GM12878 (cell line): ENCODE measurements at regions of chr2 and their contacts with region 1.

Region 1: GRCh38 chr2:74587664-74588277 is 33.3 kb downstream of the DOK1 start:
- DNase-seq: no peak
- ATAC-seq: peak; percentile 86
- H3K4me3 ChIP-seq: no peak overlapping the region
- H3K27ac ChIP-seq: no peak overlapping the region
- H3K4me1 ChIP-seq: peaks cover 29% of the 10 kb centered on the region
- H3K27me3 ChIP-seq: no peaks in the 10 kb centered on the region
- CTCF ChIP-seq: peak; percentile 68 to 90 (median 86); a peak in 5 of 6 replicates
- EP300 ChIP-seq: no peak
- POLR2A ChIP-seq: no peak
- RAD21 ChIP-seq: peak; percentile 96

Region 2: DNA sequence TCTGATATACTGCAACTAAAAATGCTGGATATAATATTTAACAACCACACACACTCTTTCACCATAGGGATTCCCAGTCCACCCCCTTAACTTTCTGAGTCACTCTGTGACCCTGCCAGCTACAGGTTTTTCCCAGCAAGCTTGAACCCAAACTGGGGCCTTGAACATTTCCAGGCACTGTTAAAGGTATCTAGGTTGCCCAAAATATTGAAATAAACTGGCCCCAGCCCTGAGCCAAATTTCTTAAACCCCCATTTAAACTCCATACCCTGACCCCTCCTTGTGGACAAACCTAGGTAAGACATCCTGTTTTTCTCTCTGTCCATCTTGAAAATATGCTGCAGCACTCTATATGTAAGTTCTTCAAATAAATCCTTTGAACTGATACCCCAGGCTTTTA is 188.0 kb before region 1 on chr2:
- CTCF ChIA-PET with region 1: interaction called, 3 read pairs
- POLR2A ChIA-PET with region 1: no interaction called
- RAD21 ChIA-PET with region 1: interaction called, 4 read pairs
- SMC1A ChIA-PET with region 1: interaction called, 4 read pairs
- in situ Hi-C with region 1: no loop called
- intact Hi-C with region 1: loop called (anchors 5 kb)
- DNase-seq: no peak
- ATAC-seq: peak; percentile 92
- H3K4me3 ChIP-seq: no peak overlapping the region
- H3K27ac ChIP-seq: no peak overlapping the region
- H3K4me1 ChIP-seq: no peaks in the 10 kb centered on the region
- H3K27me3 ChIP-seq: no peaks in the 10 kb centered on the region
- CTCF ChIP-seq: peak; percentile 49 to 67 (median 60)
- EP300 ChIP-seq: no peak
- POLR2A ChIP-seq: no peak
- RAD21 ChIP-seq: peak; percentile 74

Region 3: GRCh38 chr2:74482801-74483674 is 104.7 kb before region 1 on chr2 and contains the starts of genes CCDC142 and TTC31:
- CTCF ChIA-PET with region 1: interaction called, 280 read pairs
- POLR2A ChIA-PET with region 1: interaction called, 14 read pairs
- RAD21 ChIA-PET with region 1: interaction called, 121 read pairs
- SMC1A ChIA-PET with region 1: interaction called, 128 read pairs
- in situ Hi-C with region 1: loop called (anchors 10 kb)
- intact Hi-C with region 1: loop called (anchors 1 kb)
- DNase-seq: peak; percentile 89
- ATAC-seq: peak; percentile 95
- H3K4me3 ChIP-seq: peak within 1 kb of the TSS; percentile 97
- H3K27ac ChIP-seq: peak within 1 kb of the TSS; percentile 96
- H3K4me1 ChIP-seq: peaks cover 13% of the 10 kb centered on the region
- H3K27me3 ChIP-seq: no peaks in the 10 kb centered on the region; a peak in 1 of 4 replicates
- CTCF ChIP-seq: peak; percentile 93 to 97 (median 97)
- EP300 ChIP-seq: no peak
- POLR2A ChIP-seq: peak; percentile 83
- RAD21 ChIP-seq: peak; percentile 78
- polyA plus RNA-seq, gene CCDC142: 0.93 to 1.5 TPM
- polyA plus RNA-seq, gene TTC31: 6.5 to 7.2 TPM

Region 4: DNA sequence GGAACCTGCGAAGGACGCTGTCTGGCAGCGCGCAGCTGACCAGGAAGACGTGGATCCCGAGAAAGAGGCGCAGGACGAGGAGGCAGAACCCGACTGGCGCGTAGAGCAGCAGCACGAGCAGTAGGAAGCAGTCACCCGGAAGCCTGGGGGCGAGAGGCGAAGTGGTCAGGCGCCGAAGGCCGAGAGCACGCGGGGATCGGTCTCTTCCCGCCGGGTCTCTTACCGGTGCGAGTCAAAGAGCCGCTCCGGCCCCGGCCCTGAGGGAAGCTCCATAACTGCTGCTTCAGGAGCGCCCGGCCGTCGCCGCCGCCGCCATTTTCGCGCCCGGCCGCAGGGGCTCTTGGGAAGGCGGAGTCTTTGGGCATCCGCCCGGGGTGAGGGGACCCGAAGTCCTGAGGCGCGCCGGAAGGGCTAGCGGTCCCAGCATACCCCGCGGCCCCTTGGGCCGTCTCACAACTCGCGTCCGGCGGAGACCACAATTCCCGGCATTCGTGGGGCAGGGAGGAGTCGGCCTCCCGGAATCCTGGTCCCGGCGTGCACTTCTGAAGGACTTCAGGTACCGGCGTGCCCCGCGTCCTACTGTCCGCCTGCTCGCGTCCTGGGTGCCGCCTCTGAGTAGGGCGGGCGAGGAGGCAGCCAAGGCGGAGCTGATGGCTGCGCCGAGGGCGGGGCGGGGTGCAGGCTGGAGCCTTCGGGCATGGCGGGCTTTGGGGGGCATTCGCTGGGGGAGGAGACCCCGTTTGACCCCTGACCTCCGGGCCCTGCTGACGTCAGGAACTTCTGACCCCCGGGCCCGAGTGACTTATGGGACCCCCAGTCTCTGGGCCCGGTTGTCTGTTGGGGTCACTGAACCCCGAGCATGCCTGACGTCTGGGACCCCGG is 58.2 kb before region 1 on chr2 and contains the starts of genes AUP1 and HTRA2:
- CTCF ChIA-PET with region 1: interaction called, 226 read pairs
- POLR2A ChIA-PET with region 1: interaction called, 66 read pairs
- RAD21 ChIA-PET with region 1: interaction called, 158 read pairs
- SMC1A ChIA-PET with region 1: interaction called, 208 read pairs
- in situ Hi-C with region 1: no loop called
- intact Hi-C with region 1: loop called (anchors 1 kb)
- DNase-seq: peak; percentile 96
- ATAC-seq: peak; percentile 90
- H3K4me3 ChIP-seq: peak within 1 kb of the TSS; percentile 94
- H3K27ac ChIP-seq: peak within 1 kb of the TSS; percentile 96
- H3K4me1 ChIP-seq: peaks cover 33% of the 10 kb centered on the region
- H3K27me3 ChIP-seq: no peaks in the 10 kb centered on the region
- CTCF ChIP-seq: no peak
- EP300 ChIP-seq: no peak
- POLR2A ChIP-seq: peak; percentile 84
- RAD21 ChIP-seq: no peak
- polyA plus RNA-seq, gene AUP1: 39.1 to 56.5 TPM
- polyA plus RNA-seq, gene HTRA2: 42.3 to 46.4 TPM

Region 5: DNA sequence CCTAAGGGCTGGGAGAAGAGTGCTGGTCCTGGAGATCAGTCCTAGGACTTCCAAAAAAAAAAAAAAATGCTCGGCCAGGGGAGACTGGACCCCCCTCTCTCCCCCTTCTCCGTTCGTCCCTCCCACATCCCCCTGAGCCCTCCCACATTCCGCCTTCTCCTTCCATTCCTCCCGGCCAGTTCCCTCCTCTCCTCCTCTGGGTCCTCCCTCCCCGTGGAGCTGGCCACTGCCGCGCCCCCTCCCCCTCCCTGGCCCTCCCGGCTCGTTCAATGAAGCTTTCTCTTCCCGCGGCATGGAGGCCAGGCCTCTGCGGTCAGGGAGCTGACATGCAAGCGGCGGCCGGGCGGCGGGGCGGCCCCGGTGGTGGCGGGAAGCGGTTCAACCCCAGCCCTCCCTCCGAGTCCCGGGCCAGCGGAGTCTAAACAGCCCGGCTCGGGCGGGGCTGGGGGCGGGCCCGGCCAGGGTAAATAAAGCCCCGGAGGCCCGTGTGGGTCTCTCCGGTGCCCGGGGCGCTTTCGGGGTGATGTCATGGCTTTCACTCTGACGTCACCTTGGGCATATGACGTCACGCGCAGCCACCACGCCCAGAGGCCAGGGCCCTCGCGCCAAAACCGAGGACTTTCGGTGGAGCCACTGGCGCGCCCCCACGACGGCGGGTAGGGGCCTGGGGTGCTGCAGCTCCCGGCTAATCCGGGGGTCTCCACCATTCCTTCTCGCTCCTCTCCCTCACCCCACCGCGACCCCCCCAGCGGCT is 33.7 kb before region 1 on chr2 and contains the start of gene LOXL3:
- CTCF ChIA-PET with region 1: interaction called, 115 read pairs
- POLR2A ChIA-PET with region 1: interaction called, 441 read pairs
- RAD21 ChIA-PET with region 1: interaction called, 96 read pairs
- SMC1A ChIA-PET with region 1: interaction called, 106 read pairs
- in situ Hi-C with region 1: no loop called
- intact Hi-C with region 1: loop called (anchors 2 kb)
- DNase-seq: no peak
- ATAC-seq: peak; percentile 20
- H3K4me3 ChIP-seq: peak within 1 kb of the TSS; percentile 95
- H3K27ac ChIP-seq: peak within 1 kb of the TSS; percentile 93
- H3K4me1 ChIP-seq: peaks cover 29% of the 10 kb centered on the region
- H3K27me3 ChIP-seq: no peaks in the 10 kb centered on the region
- CTCF ChIP-seq: no peak; a peak in 1 of 6 replicates
- EP300 ChIP-seq: peak in 1 of 2 experiments; percentile 28; a peak in 1 of 4 replicates
- POLR2A ChIP-seq: peak; percentile 62; the same call in 1 of the 2 replicates
- RAD21 ChIP-seq: 0 out of 2 replicates have a peak, but pooled peaks have one; percentile 4
- polyA plus RNA-seq, gene LOXL3: 6.2 to 6.7 TPM

Region 6: GRCh38 chr2:74602586-74603281 is 15.0 kb after region 1 on chr2:
- CTCF ChIA-PET with region 1: interaction called, 74 read pairs
- POLR2A ChIA-PET with region 1: interaction called, 4 read pairs
- RAD21 ChIA-PET with region 1: interaction called, 9 read pairs
- SMC1A ChIA-PET with region 1: interaction called, 44 read pairs
- in situ Hi-C with region 1: no loop called
- intact Hi-C with region 1: no loop called
- DNase-seq: no peak
- ATAC-seq: no peak
- H3K4me3 ChIP-seq: no peak overlapping the region
- H3K27ac ChIP-seq: no peak overlapping the region
- H3K4me1 ChIP-seq: no peaks in the 10 kb centered on the region
- H3K27me3 ChIP-seq: no peaks in the 10 kb centered on the region; a peak in 3 of 4 replicates
- CTCF ChIP-seq: no peak
- EP300 ChIP-seq: no peak
- POLR2A ChIP-seq: no peak
- RAD21 ChIP-seq: no peak

Region 7: GRCh38 chr2:74887445-74887951 is 299.7 kb after region 1 on chr2:
- CTCF ChIA-PET with region 1: no interaction called
- POLR2A ChIA-PET with region 1: no interaction called
- RAD21 ChIA-PET with region 1: no interaction called
- SMC1A ChIA-PET with region 1: no interaction called
- in situ Hi-C with region 1: no loop called
- intact Hi-C with region 1: no loop called
- DNase-seq: no peak
- ATAC-seq: no peak
- H3K4me3 ChIP-seq: no peak overlapping the region
- H3K27ac ChIP-seq: no peak overlapping the region
- H3K4me1 ChIP-seq: no peaks in the 10 kb centered on the region
- H3K27me3 ChIP-seq: no peaks in the 10 kb centered on the region
- CTCF ChIP-seq: no peak
- EP300 ChIP-seq: no peak
- POLR2A ChIP-seq: no peak
- RAD21 ChIP-seq: no peak

Region 8: GRCh38 chr2:76391678-76392077 is 1803.9 kb after region 1 on chr2:
- CTCF ChIA-PET with region 1: no interaction called
- POLR2A ChIA-PET with region 1: no interaction called
- RAD21 ChIA-PET with region 1: no interaction called
- SMC1A ChIA-PET with region 1: no interaction called
- in situ Hi-C with region 1: no loop called
- intact Hi-C with region 1: no loop called
- DNase-seq: no peak
- ATAC-seq: no peak
- H3K4me3 ChIP-seq: no peak overlapping the region
- H3K27ac ChIP-seq: no peak overlapping the region
- H3K4me1 ChIP-seq: no peaks in the 10 kb centered on the region
- H3K27me3 ChIP-seq: no peaks in the 10 kb centered on the region
- CTCF ChIP-seq: no peak
- EP300 ChIP-seq: no peak
- POLR2A ChIP-seq: no peak
- RAD21 ChIP-seq: no peak